AG04449 (cell line): ENCODE measurements at regions of chr15 and their contacts with region 1.

Region 1: GRCh38 chr15:80660122-80660521 is 35.0 kb upstream of the ABHD17C start:
- DNase-seq: no peak
- H3K4me3 ChIP-seq: no peak overlapping the region
- CTCF ChIP-seq: peak; percentile 65

Region 2: GRCh38 chr15:80645494-80646065 is 14.5 kb before region 1 on chr15:
- CTCF ChIA-PET with region 1: interaction called, 15 read pairs
- POLR2A ChIA-PET with region 1: no interaction called
- DNase-seq: no peak
- H3K4me3 ChIP-seq: no peak overlapping the region
- CTCF ChIP-seq: no peak

Region 3: DNA sequence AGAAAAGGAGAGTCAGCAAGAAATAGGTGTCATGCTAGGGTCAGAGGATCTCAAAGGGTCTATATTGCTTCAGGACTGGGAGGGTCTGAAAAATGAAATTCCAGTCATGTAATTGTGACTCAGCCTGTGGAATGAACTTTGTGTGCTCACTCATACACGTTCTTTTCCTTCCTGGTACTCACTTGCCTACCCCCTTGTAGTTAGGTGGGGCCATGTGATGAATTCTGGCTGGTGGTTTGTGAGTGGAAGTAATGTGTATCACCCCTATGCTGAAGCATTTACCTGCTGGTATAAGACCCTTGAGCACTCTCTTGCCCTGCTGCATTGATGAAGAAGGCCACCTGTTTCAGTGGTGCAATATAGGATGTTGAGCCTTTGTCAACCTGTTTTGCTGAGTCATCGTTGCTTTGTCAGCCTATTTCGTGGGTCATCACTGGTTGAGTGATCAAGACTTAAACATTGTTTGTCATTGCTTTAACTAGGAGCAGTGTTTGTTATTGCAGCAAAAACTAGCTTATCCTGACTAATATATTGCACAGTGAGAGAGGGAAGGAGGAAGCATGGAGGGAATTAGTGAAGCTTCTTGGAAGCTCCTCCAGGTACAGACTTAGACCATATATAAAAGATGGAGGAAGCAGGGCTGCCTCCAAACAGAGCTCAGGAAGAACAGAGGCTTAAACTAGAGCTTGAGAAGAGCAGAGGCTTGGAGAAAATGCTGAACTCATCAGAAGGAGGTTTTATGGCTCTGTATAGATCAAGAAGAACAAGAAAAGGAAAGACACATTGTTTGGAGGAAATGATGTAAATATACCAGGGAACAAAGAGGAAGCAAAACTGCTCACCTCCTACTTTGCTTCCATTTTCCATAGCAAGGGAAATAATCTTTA is 369.5 kb after region 1 on chr15:
- CTCF ChIA-PET with region 1: no interaction called
- POLR2A ChIA-PET with region 1: no interaction called
- DNase-seq: no peak
- H3K4me3 ChIP-seq: no peak overlapping the region
- CTCF ChIP-seq: no peak